ENCODE measurements at regions of chr7 and their contacts with region 1.

Region 1: DNA sequence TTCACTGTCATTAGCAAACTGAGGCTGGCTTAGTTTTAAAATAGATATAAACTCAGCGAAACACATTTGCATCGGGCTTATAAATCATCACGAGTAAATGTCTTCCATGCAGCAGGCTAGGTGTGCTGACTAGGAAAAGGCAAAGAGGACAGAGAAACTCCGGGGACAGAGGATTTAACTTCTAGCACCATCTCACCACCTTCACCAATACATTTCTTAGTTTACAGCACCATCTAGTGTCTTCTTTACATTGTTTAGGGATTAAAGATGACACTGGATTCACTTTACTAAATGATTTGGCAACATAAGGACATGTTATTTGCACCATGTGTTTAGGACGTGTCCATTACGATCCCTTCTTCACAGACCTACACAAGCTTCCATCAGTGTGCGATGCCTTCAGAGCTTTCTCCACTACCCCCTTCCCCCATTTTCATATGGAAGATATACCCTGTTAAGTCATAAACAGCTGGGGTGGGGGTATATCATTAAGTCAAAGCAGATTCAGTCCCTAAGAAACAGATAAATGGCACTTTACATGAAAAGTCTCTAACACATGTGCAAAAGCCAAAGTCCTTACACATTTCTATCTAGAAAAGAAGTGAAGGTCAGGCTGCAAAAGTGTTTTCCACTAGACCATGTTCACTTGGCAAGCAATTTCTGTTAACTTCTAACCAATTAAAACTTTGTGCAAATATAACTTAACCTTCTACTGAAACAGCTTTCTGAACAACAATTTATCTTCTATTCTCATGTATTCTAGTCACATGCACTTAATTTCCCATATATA is 103.3 kb downstream of the GRB10 start:
- DNase-seq: peak in 1 of 2 experiments; percentile 59
- H3K4me3 ChIP-seq: no peak overlapping the region
- H3K27ac ChIP-seq: no peak overlapping the region
- H3K4me1 ChIP-seq: peaks cover 10% of the 10 kb centered on the region
- H3K27me3 ChIP-seq: no peaks in the 10 kb centered on the region
- CTCF ChIP-seq: peak; percentile 74

Region 2: GRCh38 chr7:50101873-50102272 is 577.5 kb before region 1 on chr7:
- CTCF ChIA-PET with region 1: no interaction called
- POLR2A ChIA-PET with region 1: no interaction called
- intact Hi-C with region 1: loop called (anchors 5 kb)
- DNase-seq: no peak
- H3K4me3 ChIP-seq: no peak overlapping the region
- H3K27ac ChIP-seq: no peak overlapping the region
- H3K4me1 ChIP-seq: no peaks in the 10 kb centered on the region
- H3K27me3 ChIP-seq: peaks cover 28% of the 10 kb centered on the region
- CTCF ChIP-seq: no peak

Region 3: GRCh38 chr7:50142425-50143017 is 536.9 kb before region 1 on chr7:
- CTCF ChIA-PET with region 1: no interaction called
- POLR2A ChIA-PET with region 1: no interaction called
- intact Hi-C with region 1: loop called (anchors 1 kb)
- DNase-seq: no peak
- H3K4me3 ChIP-seq: no peak overlapping the region
- H3K27ac ChIP-seq: no peak overlapping the region
- H3K4me1 ChIP-seq: no peaks in the 10 kb centered on the region
- H3K27me3 ChIP-seq: peaks cover 12% of the 10 kb centered on the region; the same call in 1 of the 2 replicates
- CTCF ChIP-seq: peak; percentile 86

Region 4: DNA sequence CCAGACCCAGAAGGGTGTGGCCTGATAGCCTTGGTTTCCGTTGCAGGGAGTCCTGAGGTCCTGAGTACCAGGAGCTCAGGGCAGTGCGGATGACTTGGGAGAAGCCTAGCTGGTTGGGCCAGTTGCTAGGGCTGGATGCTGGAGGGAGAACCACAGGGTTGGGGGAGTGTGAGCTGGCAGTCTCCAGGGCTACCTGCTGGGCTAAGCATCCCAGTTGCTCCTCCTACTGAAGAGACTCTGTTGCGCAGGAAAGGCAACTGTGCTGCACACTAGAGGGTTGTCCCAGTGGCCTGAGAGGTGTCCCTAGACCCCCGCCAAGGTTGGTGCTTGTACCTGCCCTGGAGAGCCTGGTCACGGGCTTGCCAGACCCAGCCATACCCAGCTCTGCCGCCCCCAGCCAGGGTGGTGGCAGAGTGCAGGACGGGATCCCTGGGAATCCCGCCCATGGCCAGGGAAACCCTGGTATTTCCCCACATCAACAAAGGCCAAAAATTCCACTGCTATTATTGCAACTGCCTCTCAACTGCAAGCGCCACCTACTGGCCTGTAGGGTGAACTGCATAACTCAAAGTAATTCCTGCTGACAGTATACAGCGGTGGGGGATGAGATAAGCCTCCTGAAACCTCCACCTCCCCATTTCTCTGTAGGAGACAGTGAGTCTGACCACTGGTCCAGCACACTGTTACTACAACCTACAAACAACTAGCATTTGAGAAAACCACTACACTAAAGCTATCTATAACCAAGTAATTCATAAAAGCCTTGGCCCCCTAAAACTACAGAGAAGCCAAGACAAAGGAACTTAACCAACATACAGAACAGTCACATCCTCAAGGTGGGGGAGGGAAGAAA is 46.6 kb before region 1 on chr7:
- CTCF ChIA-PET with region 1: no interaction called
- POLR2A ChIA-PET with region 1: no interaction called
- intact Hi-C with region 1: loop called (anchors 5 kb)
- DNase-seq: peak in 1 of 2 experiments; percentile 48
- H3K4me3 ChIP-seq: no peak overlapping the region
- H3K27ac ChIP-seq: no peak overlapping the region
- H3K4me1 ChIP-seq: no peaks in the 10 kb centered on the region
- H3K27me3 ChIP-seq: no peaks in the 10 kb centered on the region
- CTCF ChIP-seq: peak; percentile 99

Measured in PC-9 (cell line).